ENCODE measurements at regions of chr19 and their contacts with region 1.

Region 1: GRCh38 chr19:58519355-58520256 is at the start of gene ZBTB45:
- DNase-seq: peak; percentile 93 to 94 (median 93)
- H3K4me3 ChIP-seq: peak within 1 kb of the TSS; percentile 57 to 90 (median 86)
- H3K4me3 Mint-ChIP-seq: peak within 1 kb of the TSS; percentile 92 to 93
- H3K27ac ChIP-seq: peak within 1 kb of the TSS; percentile 90 to 93
- H3K27ac Mint-ChIP-seq: peak within 1 kb of the TSS; percentile 95 to 99 (median 98)
- H3K4me1 ChIP-seq: peaks cover 30 to 31% of the 10 kb centered on the region in 2 donors
- H3K4me1 Mint-ChIP-seq: peaks cover 36% of the 10 kb centered on the region
- H3K27me3 ChIP-seq: no peaks in the 10 kb centered on the region
- H3K27me3 Mint-ChIP-seq: peaks cover 0 to 1% (median 0%) of the 10 kb centered on the region in 3 donors
- CTCF ChIP-seq: peak; percentile 79
- polyA plus RNA-seq, gene ZBTB45: 2.2 to 5.3 (median 2.6) TPM

Region 2: GRCh38 chr19:58479736-58480480 is 39.7 kb before region 1 on chr19:
- intact Hi-C with region 1: no loop called
- DNase-seq: no peak
- H3K4me3 ChIP-seq: no peak overlapping the region
- H3K4me3 Mint-ChIP-seq: no peak overlapping the region
- H3K27ac ChIP-seq: no peak overlapping the region
- H3K27ac Mint-ChIP-seq: no peak overlapping the region
- H3K4me1 ChIP-seq: peaks cover 14 to 18% of the 10 kb centered on the region in 2 donors
- H3K4me1 Mint-ChIP-seq: peaks cover 13% of the 10 kb centered on the region
- H3K27me3 ChIP-seq: no peaks in the 10 kb centered on the region
- H3K27me3 Mint-ChIP-seq: peaks cover 0 to 6% (median 2%) of the 10 kb centered on the region in 3 donors
- CTCF ChIP-seq: no peak

Region 3: DNA sequence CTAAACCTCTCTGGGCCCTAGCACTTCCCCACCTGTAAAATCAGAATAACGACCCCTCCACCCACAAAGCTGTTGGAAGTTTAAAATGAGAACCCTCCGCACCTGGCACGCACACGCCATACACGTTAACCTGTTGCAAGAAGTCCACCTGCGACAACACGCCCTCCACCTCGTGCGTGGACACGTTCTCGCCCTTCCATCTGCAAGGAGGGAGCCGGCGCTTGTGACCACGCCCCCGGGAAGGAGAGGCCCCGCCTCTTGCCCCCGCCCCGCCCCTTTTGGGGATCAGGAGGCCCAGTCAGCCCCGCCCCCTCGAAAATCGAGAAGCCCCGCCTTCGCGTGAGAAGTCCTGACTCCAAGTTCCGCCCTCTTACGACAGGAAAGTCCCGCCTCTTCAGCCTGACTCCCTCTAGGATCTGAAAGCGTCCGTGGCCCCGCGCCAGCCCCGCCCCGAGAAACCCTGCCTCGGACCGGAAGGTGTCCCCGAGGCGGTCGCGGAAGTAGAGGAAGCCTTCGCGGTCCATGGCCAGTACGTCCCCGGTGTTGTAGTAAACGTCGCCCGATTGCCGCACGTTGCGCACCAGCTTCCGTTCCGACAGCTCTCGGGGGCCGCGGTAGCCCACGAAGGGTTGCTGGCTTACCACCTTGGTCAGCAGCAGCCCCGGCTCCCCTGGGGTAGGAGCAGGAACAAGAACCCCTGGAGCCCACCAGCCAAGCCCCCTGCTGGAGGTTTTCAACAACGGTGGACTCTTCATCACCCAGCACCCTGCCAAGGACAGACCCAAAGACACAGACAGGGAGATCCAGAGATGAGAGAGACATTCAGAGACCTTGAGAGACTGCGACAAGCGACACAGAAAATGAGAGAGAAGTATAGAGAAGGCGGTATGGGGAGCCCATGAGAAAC is 20.3 kb before region 1 on chr19:
- intact Hi-C with region 1: loop called in 1 of 2 experiments (anchors 2 kb)
- DNase-seq: peak; percentile 98 to 99 (median 98)
- H3K4me3 ChIP-seq: peak overlapping the region; percentile 33 to 75 (median 57)
- H3K4me3 Mint-ChIP-seq: peak overlapping the region; percentile 82 to 90
- H3K27ac ChIP-seq: peak overlapping the region; percentile 82 to 83
- H3K27ac Mint-ChIP-seq: peak overlapping the region; percentile 88 to 94 (median 92)
- H3K4me1 ChIP-seq: peaks cover 13 to 16% of the 10 kb centered on the region in 2 donors
- H3K4me1 Mint-ChIP-seq: peaks cover 14% of the 10 kb centered on the region
- H3K27me3 ChIP-seq: no peaks in the 10 kb centered on the region
- H3K27me3 Mint-ChIP-seq: peaks cover 4 to 12% (median 7%) of the 10 kb centered on the region in 3 donors
- CTCF ChIP-seq: peak; percentile 18

Region 4: DNA sequence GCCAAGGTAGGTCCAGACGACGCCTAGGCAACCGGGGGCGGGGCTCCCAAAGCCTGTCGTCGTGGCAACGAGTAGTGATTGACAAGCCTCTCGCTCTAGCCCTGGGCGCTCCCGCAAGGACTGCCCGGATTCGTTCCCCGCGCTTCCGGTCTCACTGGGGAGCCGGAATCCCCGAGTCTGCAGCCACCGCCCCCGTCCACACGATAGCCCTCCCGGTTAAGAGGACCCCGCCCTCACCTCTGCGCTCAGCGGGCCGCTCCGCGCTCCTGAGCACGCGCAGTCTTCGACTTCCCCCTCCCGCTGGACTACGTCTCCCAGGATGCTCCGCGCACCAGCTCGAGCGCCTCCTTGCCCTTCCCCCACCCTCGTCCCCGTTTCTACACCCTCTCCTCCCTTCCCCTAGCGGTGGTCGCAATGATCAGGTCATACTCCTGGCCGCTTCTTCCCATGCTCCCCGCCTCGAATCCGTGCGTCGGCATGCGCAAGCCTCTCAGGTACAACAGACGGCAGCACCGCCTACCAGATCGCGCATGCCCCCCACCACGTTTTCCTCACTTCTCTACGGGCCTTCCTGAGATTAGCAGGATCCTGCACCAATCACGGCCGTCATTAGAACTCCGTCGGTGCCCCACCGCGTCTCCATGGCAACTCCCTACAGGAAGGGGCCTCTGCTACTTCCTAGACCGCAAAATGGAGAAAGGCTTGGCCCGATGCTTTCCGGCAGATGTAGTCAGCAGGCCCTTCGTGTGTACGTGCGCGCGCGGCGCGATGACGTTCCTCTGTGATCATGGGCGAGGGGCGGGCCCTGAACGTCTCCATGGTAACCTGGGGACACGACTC is 53.4 kb after region 1 on chr19 and contains the start of gene MZF1:
- intact Hi-C with region 1: loop called in 1 of 2 experiments (anchors 2 kb)
- DNase-seq: peak; percentile 100
- H3K4me3 ChIP-seq: peak within 1 kb of the TSS; percentile 58 to 82 (median 78)
- H3K4me3 Mint-ChIP-seq: peak within 1 kb of the TSS; percentile 99 to 100
- H3K27ac ChIP-seq: peak within 1 kb of the TSS; percentile 96 to 99
- H3K27ac Mint-ChIP-seq: peak within 1 kb of the TSS; percentile 100
- H3K4me1 ChIP-seq: peaks cover 32 to 37% of the 10 kb centered on the region in 2 donors
- H3K4me1 Mint-ChIP-seq: peaks cover 32% of the 10 kb centered on the region
- H3K27me3 ChIP-seq: no peaks in the 10 kb centered on the region
- H3K27me3 Mint-ChIP-seq: peaks cover 0 to 6% (median 0%) of the 10 kb centered on the region in 3 donors
- CTCF ChIP-seq: no peak
- polyA plus RNA-seq, gene MZF1: 1.6 to 55.6 (median 1.7) TPM

Measured in CD14-positive monocyte (primary cell).